Caco-2 (cell line): ENCODE measurements at regions of chr10 and their contacts with region 1.

Region 1: DNA sequence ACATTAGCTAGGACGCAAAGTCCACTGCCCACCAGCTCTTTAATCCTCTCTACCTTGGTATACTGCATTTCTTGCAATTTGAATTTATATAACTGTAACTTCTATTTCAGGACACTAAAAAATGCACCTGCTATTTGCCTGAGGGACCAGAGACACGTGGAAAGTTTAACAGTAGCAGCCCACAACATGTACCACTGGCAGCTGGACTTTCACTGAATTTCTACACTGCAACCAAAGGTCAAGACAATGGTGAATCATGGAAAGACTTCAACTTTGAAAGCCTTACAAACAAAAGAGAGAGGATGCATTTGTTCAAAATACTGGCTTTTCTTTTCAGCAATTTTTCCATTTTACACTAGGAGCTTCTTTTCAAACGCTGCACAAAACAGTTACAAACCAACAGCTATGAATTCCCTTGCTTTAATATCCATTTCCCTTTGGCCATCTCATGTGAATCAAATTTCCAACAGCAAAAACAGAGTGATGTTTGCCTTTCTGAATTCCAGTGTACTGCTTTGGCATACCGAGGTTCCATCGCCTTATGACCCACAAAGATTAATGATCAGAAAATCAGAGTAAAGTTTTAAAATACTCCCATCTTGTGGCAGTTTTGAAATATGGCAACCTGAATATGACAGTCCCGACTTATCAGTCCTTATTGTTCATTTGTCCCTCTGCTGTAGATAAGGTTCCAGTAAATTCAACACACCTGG is 29.9 kb upstream of the HNRNPH3 start:
- DNase-seq: peak in 1 of 2 experiments; percentile 66
- H3K4me3 ChIP-seq: no peak overlapping the region
- H3K4me3 Mint-ChIP-seq: no peak overlapping the region
- H3K27ac Mint-ChIP-seq: no peak overlapping the region
- H3K4me1 ChIP-seq: peaks cover 20% of the 10 kb centered on the region
- H3K4me1 Mint-ChIP-seq: peaks cover 21% of the 10 kb centered on the region
- H3K27me3 ChIP-seq: no peaks in the 10 kb centered on the region
- H3K27me3 Mint-ChIP-seq: no peaks in the 10 kb centered on the region
- CTCF ChIP-seq: peak; percentile 65 to 83

Region 2: DNA sequence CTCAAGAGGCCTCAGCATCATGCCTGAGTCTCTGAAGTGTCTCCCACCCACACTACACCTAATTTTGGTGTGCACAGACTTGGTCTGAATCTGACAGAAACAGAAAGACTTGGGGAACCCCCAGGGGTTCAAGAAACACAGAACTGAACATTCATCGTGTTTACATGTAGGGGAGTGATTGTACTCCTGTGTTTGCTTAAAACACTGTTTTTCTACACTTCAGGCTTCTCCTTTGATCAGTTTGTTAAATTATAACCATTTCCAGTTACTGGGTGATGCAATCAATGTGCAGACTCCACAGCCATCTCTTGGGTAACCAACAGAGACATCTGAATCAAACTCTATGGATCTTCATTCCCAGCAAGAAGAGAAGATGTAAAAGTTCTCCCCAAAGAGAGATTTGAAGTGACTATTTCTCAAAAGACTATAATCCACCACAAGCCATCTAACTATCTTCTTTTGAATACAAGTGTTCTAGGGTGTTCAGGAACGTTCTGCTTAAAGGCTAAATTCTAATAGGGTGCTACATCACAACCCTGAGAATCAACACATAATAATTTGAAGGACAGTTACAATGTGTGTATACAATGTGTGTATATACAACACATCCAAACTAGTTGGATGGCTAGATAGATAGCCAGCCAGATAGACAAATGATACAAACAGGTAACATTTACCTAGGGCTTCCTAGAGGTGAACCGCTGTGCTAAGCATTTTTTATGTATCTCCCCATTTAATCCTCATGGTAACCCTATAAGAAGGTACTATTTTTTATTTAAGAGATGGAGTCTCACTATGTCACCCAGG is 498.2 kb before region 1 on chr10:
- CTCF ChIA-PET with region 1: no interaction called
- POLR2A ChIA-PET with region 1: no interaction called
- intact Hi-C with region 1: no loop called
- DNase-seq: peak in 1 of 2 experiments; percentile 69
- H3K4me3 ChIP-seq: no peak overlapping the region
- H3K4me3 Mint-ChIP-seq: peak overlapping the region; percentile 30
- H3K27ac Mint-ChIP-seq: peak overlapping the region; percentile 89
- H3K4me1 ChIP-seq: peaks cover 23% of the 10 kb centered on the region
- H3K4me1 Mint-ChIP-seq: peaks cover 25% of the 10 kb centered on the region
- H3K27me3 ChIP-seq: no peaks in the 10 kb centered on the region
- H3K27me3 Mint-ChIP-seq: no peaks in the 10 kb centered on the region
- CTCF ChIP-seq: no peak

Region 3: GRCh38 chr10:68082872-68083271 is 219.1 kb before region 1 on chr10:
- CTCF ChIA-PET with region 1: no interaction called
- POLR2A ChIA-PET with region 1: no interaction called
- intact Hi-C with region 1: loop called (anchors 1 kb)
- DNase-seq: peak in 1 of 2 experiments; percentile 26
- H3K4me3 ChIP-seq: no peak overlapping the region
- H3K4me3 Mint-ChIP-seq: no peak overlapping the region
- H3K27ac Mint-ChIP-seq: no peak overlapping the region
- H3K4me1 ChIP-seq: peaks cover 15% of the 10 kb centered on the region
- H3K4me1 Mint-ChIP-seq: peaks cover 19% of the 10 kb centered on the region
- H3K27me3 ChIP-seq: no peaks in the 10 kb centered on the region
- H3K27me3 Mint-ChIP-seq: peaks cover 3% of the 10 kb centered on the region
- CTCF ChIP-seq: peak; percentile 45 to 54

Region 4: DNA sequence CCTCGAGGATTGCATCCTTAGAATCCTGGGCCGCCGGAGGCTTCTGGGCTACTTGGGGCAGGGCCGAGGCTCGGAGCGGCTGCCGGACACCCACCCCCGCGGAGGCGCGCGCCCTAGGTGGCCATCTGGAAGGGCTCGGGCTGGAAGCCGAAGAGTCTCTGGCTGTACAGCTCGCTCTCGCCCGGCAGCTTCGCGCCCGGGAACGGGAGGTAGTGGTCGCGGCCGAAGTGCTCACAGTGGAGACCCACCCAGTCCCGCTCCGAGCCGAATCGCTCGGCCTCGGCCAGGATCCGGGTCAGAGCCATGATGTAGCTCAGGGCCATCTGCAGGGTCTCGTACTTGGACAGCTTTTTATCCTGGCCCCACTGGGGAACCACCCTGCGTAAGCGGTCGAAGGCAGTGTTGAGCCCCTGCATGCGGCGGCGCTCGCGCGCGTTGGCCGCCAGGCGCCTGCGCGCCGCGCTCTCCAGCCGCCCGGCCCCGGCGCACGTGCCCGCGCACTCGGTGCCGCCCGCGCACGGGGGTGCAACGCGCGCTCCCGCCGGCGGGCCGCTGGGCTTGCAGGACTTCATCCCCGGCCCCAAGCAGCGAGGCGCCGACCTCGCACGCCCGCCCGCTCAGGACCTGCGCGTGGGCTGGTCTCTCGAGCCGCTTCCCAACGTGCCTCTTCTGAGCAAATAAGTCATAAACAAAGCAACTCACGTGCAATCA is 70.7 kb before region 1 on chr10:
- CTCF ChIA-PET with region 1: interaction called, 7 read pairs
- POLR2A ChIA-PET with region 1: no interaction called
- intact Hi-C with region 1: loop called (anchors 5 kb)
- DNase-seq: peak; percentile 89 to 94
- H3K4me3 ChIP-seq: peak overlapping the region; percentile 86
- H3K4me3 Mint-ChIP-seq: peak overlapping the region; percentile 87
- H3K27ac Mint-ChIP-seq: peak overlapping the region; percentile 72
- H3K4me1 ChIP-seq: 0 out of 2 replicates have a peak, but pooled peaks cover 5% of the 10 kb centered on the region
- H3K4me1 Mint-ChIP-seq: peaks cover 7% of the 10 kb centered on the region
- H3K27me3 ChIP-seq: no peaks in the 10 kb centered on the region
- H3K27me3 Mint-ChIP-seq: peaks cover 5% of the 10 kb centered on the region
- CTCF ChIP-seq: peak in 1 of 2 experiments; percentile 52